ENCODE measurements at regions of chr13 and their contacts with region 1.

Region 1: GRCh38 chr13:30334663-30335386 is 27.5 kb upstream of the KATNAL1 start:
- DNase-seq: no peak
- ATAC-seq: peak; percentile 16

Region 2: DNA sequence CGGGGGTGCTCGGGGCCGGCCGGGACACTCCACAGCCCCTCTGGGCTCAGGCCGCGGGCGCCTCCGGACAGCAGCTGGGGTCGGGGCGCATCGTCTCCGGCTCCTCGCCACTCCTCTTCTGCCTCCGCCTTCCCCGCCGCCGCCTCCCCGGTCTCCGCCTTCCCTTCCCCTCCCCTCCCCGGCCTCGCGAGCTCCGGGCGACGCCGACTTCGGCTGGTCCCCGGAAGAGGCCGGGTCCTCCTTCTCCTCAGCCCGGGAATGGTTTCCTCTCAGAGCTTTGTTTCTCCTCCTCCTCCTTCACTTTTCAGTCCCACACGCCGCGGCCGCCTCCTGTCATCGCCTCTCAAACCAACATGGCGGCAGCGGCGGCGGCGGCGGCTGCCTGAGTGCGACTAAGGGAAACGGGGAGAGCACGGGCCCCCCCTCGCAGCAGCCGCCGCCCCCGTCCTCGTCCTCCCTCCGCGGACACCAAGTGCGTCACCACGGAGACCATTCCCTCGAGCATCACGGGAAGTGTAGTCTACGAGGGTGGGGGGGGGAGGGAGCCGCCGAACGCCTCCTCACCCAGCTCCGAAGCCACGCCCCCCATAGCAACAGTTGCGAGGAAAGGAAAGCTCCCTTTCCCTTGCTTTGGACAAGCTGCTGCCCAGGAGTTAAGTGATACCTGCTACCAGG is 484.5 kb before region 1 on chr13 and contains the start of gene UBL3:
- intact Hi-C with region 1: no loop called
- DNase-seq: peak; percentile 97
- ATAC-seq: peak; percentile 96
- total RNA-seq, gene UBL3: 22.6 TPM

Region 3: GRCh38 chr13:30132623-30133553 is 201.9 kb before region 1 on chr13:
- intact Hi-C with region 1: loop called (anchors 10 kb)
- DNase-seq: peak; percentile 98
- ATAC-seq: peak; percentile 96

Region 4: GRCh38 chr13:30145709-30146367 is 189.0 kb before region 1 on chr13:
- intact Hi-C with region 1: no loop called
- DNase-seq: no peak
- ATAC-seq: no peak

Measured in left ventricle myocardium superior (tissue), 1 donor.